ENCODE measurements at regions of chrX and their contacts with region 1.

Region 1: DNA sequence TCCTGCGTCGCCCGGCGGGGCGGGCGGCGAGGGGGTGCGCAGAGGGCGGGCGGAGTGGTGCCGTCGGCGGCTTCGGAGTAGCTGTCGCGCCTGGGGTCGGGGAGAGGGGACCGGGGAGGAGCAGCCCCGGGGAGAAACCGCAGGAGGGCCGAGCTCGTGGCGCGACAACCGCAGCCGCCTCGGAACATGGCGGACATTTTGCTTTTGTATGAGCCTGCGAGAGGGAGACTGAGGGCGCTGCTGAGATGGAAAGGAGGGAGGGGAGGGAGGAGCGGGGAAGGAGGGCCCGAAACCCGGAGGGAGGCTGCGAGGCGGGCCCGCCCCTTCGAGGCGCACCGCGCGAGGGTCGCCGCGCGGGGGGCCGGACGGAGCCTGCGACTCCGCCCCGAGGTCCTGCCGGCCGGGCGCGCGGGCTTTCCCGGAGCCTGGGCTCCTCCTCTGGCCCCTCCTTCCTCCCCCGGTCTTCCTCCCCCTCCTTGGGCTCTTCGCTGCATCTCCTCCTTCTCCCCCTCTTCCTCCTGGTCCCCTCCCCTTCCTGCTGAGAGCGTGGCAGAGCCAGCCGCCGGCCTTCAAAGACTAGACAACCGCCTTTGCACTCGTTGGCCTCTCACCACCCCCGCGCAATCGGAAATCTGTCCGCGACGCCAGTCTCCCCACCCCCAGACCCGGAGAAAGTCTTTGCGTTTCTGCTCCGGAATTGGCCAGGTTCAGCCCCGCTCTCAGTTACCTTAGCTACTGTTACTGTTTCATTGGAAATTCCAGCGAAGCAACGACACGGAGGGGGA is 1.1 kb downstream of the INTS6L start:
- DNase-seq: peak; percentile 87 to 91 (median 88)
- ATAC-seq: peak; percentile 74 to 95 (median 94)
- H3K4me3 ChIP-seq: peak overlapping the region; percentile 20 to 89 (median 70)
- H3K27ac ChIP-seq: peak overlapping the region; percentile 79 to 93 (median 86)
- H3K4me1 ChIP-seq: peaks cover 0 to 13% (median 0%) of the 10 kb centered on the region in 12 donors
- H3K27me3 ChIP-seq: no peaks in the 10 kb centered on the region
- CTCF ChIP-seq: peak in 2 of 12 donors; percentile 10 to 12
- POLR2A ChIP-seq: peak in 1 of 2 donors; percentile 31

Region 2: DNA sequence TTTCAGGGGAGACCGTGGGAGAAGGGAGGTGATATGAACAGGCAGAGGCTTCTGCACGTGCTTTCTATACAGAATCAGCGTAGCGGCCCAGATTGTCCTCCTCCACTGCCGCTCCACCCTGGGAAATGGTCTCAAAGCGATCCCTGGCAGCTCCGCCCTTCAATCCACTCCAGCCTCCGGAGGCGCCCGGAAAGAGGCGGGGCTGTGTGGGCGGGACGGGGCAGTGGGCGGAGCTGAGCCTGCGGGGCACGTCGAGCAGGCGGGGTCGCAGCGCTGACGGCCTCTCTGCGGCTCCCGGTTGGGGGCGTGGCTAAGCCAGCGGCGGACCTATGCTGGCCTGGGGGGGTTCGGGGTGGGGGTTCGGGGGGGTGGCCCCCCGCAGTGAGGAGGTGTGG is 100.1 kb before region 1 on chrX:
- intact Hi-C with region 1: loop called in 1 of 10 experiments (anchors 5 kb)
- DNase-seq: peak; percentile 88 to 94 (median 89)
- ATAC-seq: peak; percentile 90 to 98 (median 96)
- H3K4me3 ChIP-seq: peak overlapping the region; percentile 25 to 71 (median 55)
- H3K27ac ChIP-seq: peak overlapping the region in 1 of 12 donors; percentile 9
- H3K4me1 ChIP-seq: peaks cover 0 to 10% (median 0%) of the 10 kb centered on the region in 12 donors
- H3K27me3 ChIP-seq: peaks cover 0 to 3% (median 0%) of the 10 kb centered on the region in 9 donors
- CTCF ChIP-seq: no peak
- POLR2A ChIP-seq: peak in 1 of 2 donors; percentile 22

Region 3: GRCh38 chrX:135605906-135606305 is 84.3 kb after region 1 on chrX:
- intact Hi-C with region 1: no loop called
- DNase-seq: no peak
- ATAC-seq: no peak
- H3K4me3 ChIP-seq: no peak overlapping the region
- H3K27ac ChIP-seq: no peak overlapping the region
- H3K4me1 ChIP-seq: no peaks in the 10 kb centered on the region
- H3K27me3 ChIP-seq: peaks cover 0 to 12% (median 0%) of the 10 kb centered on the region in 9 donors
- CTCF ChIP-seq: no peak
- POLR2A ChIP-seq: no peak

Region 4: DNA sequence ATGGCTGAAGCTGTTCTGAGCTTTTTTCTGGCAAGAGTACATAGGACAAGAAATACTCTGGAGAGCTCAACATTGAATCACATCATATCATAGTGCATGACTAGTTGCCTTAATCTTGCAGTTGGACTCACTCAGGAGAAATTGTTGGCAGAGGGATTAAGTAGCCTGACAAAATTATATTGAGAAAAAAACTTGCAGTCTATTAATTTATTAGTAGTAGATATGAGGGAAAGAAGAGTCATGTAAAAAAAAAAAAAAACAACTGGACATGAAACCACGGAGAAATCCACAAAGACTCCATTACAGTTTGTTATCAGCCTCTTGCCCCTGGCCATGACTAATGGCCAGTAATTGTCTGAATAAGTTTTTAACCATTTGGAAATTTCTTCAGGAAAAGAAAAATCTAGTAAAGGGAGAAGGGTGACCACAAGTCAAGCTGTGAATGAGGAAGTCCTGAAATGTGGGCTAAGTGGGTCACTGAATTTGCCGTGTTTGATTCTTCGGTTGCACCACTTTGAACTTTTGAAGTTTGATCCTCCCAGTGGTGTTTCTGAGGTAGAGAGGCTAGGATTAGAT is 671.3 kb after region 1 on chrX:
- intact Hi-C with region 1: loop called in 1 of 10 experiments (anchors 10 kb)
- DNase-seq: no peak
- ATAC-seq: peak; percentile 29 to 73 (median 64)
- H3K4me3 ChIP-seq: no peak overlapping the region
- H3K27ac ChIP-seq: peak overlapping the region; percentile 62 to 93 (median 82)
- H3K4me1 ChIP-seq: peaks cover 0 to 94% (median 58%) of the 10 kb centered on the region in 12 donors
- H3K27me3 ChIP-seq: peaks cover 0 to 5% (median 0%) of the 10 kb centered on the region in 9 donors
- CTCF ChIP-seq: no peak
- POLR2A ChIP-seq: no peak

Measured in heart left ventricle (tissue), 16 donors.